K562 (cell line): ENCODE measurements at regions of chr12 and their contacts with region 1.

Region 1: GRCh38 chr12:48875944-48876515 is 10.4 kb upstream of the RND1 start:
- DNase-seq: peak in 1 of 4 experiments; percentile 7
- ATAC-seq: peak; percentile 55
- H3K4me3 ChIP-seq: no peak overlapping the region
- H3K27ac ChIP-seq: no peak overlapping the region
- H3K4me1 ChIP-seq: peaks cover 0 to 3% of the 10 kb centered on the region in 2 experiments; a peak in 2 of 5 replicates
- H3K27me3 ChIP-seq: peaks cover 3 to 4% of the 10 kb centered on the region in 2 experiments; a peak in 1 of 5 replicates
- CTCF ChIP-seq: no peak
- EP300 ChIP-seq: no peak
- POLR2A ChIP-seq: no peak
- RAD21 ChIP-seq: no peak

Region 2: GRCh38 chr12:48865434-48866290 is 10.4 kb before region 1 on chr12 and contains the start of gene RND1:
- CTCF ChIA-PET with region 1: no interaction called
- POLR2A ChIA-PET with region 1: interaction called, 12 read pairs
- in situ Hi-C with region 1: no loop called
- intact Hi-C with region 1: no loop called
- DNase-seq: peak; percentile 92 to 95 (median 94)
- ATAC-seq: peak; percentile 98
- H3K4me3 ChIP-seq: peak within 1 kb of the TSS; percentile 39
- H3K27ac ChIP-seq: peak within 1 kb of the TSS; percentile 37; the same call in 2 of the 3 replicates
- H3K4me1 ChIP-seq: peaks cover 7 to 8% of the 10 kb centered on the region in 2 experiments; a peak in 3 of 5 replicates
- H3K27me3 ChIP-seq: peaks cover 27 to 33% of the 10 kb centered on the region in 2 experiments
- CTCF ChIP-seq: peak in 1 of 3 experiments; percentile 19; a peak in 1 of 6 replicates
- EP300 ChIP-seq: no peak
- POLR2A ChIP-seq: peak; percentile 79
- RAD21 ChIP-seq: no peak
- polyA plus RNA-seq, gene RND1: not detected